ENCODE measurements at regions of chr4 and their contacts with region 1.

Region 1: GRCh38 chr4:14994241-14994640 is 8.0 kb upstream of the CPEB2 start:
- DNase-seq: peak; percentile 19
- H3K4me3 Mint-ChIP-seq: no peak overlapping the region
- H3K27ac Mint-ChIP-seq: peak overlapping the region; percentile 7
- H3K4me1 Mint-ChIP-seq: peaks cover 10% of the 10 kb centered on the region
- H3K27me3 Mint-ChIP-seq: no peaks in the 10 kb centered on the region
- CTCF ChIP-seq: no peak

Region 2: GRCh38 chr4:13990596-13991589 is 1003.3 kb before region 1 on chr4:
- CTCF ChIA-PET with region 1: no interaction called
- intact Hi-C with region 1: loop called (anchors 10 kb)
- DNase-seq: peak; percentile 21
- H3K4me3 Mint-ChIP-seq: no peak overlapping the region
- H3K27ac Mint-ChIP-seq: no peak overlapping the region
- H3K4me1 Mint-ChIP-seq: peaks cover 47% of the 10 kb centered on the region
- H3K27me3 Mint-ChIP-seq: no peaks in the 10 kb centered on the region
- CTCF ChIP-seq: no peak

Region 3: DNA sequence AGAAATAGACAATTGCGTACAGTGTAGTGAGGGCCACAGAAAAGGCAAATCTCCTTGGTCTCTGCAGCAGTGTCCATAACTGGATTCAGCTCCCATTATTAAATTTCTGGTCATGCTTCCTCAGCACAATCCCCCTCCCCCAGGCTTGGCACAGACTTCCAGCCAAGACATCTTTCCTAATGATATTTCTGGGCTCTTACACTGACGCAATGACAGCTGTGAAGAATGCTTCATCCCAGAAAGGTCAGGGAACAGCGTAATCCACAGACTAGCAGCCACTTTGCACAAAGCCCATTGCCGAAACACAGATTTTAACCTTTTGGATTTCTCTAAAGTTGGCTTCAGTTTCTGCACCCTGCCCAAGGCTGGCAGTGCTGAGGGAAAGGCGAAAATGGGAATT is 589.5 kb before region 1 on chr4:
- CTCF ChIA-PET with region 1: no interaction called
- intact Hi-C with region 1: no loop called
- DNase-seq: no peak
- H3K4me3 Mint-ChIP-seq: no peak overlapping the region
- H3K27ac Mint-ChIP-seq: no peak overlapping the region
- H3K4me1 Mint-ChIP-seq: no peaks in the 10 kb centered on the region
- H3K27me3 Mint-ChIP-seq: no peaks in the 10 kb centered on the region
- CTCF ChIP-seq: no peak

Region 4: DNA sequence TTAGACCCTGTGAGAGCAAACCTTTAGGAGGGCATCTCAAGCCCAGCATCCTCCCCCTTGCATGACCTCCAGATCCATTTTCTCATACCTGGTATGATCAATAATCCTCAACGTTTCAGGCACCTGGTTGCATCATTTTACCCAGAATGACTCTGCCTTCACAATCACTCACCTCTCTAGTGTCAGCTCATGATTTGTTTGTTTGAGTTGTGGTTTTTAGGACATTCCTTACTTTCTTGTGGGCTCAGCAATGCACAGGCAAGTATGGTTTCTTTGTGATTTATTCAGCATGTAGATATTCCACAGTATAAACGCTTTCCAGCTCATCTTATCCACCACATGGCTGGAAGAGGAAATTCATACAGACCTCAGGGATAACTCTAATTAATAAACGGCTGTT is 85.6 kb before region 1 on chr4:
- CTCF ChIA-PET with region 1: no interaction called
- intact Hi-C with region 1: no loop called
- DNase-seq: peak; percentile 22
- H3K4me3 Mint-ChIP-seq: no peak overlapping the region
- H3K27ac Mint-ChIP-seq: peak overlapping the region; percentile 36
- H3K4me1 Mint-ChIP-seq: peaks cover 23% of the 10 kb centered on the region
- H3K27me3 Mint-ChIP-seq: no peaks in the 10 kb centered on the region
- CTCF ChIP-seq: no peak

Measured in Calu3 (cell line).